ENCODE measurements at regions of chr14 and their contacts with region 1.

Region 1: DNA sequence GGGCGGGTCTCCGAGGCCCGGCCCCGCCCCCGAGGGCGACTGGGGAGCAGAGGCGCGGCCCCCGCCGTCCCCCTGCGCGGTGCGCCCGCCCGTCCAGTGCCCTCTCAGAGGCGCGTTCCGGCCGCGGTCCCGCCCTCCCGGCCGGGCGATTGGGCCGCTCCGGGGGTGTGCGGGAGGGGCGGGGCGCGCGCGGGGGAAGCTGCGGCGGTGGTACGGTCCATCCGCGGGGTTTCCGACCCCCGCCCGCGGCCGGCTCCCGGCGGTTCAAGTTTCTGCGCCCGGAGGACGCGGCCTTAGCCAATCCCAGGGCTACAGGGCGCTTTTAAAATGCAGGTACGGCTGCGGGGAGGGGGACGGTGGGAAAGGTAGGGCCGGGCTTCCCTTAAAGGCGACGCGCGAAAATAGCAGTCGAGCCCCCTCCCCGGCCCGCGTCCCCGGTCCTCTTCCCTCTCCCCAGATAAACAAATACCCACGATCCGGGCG is 317 bp upstream of the CCDC85C start:
- DNase-seq: peak; percentile 90 to 97
- H3K4me3 ChIP-seq: peak overlapping the region; percentile 86 to 90
- H3K27ac ChIP-seq: peak overlapping the region; percentile 77 to 94
- H3K4me1 ChIP-seq: peaks cover 0 to 35% (median 19%) of the 10 kb centered on the region in 4 donors
- H3K27me3 ChIP-seq: no peaks in the 10 kb centered on the region
- CTCF ChIP-seq: no peak

Region 2: GRCh38 chr14:99497894-99498293 is 106.4 kb before region 1 on chr14:
- intact Hi-C with region 1: no loop called
- DNase-seq: no peak
- H3K4me3 ChIP-seq: no peak overlapping the region
- H3K27ac ChIP-seq: no peak overlapping the region
- H3K4me1 ChIP-seq: no peaks in the 10 kb centered on the region
- H3K27me3 ChIP-seq: no peaks in the 10 kb centered on the region
- CTCF ChIP-seq: no peak

Region 3: GRCh38 chr14:99563233-99564129 is 40.8 kb before region 1 on chr14:
- intact Hi-C with region 1: loop called (anchors 2 kb)
- DNase-seq: peak in 1 of 2 donors; percentile 84
- H3K4me3 ChIP-seq: no peak overlapping the region
- H3K27ac ChIP-seq: peak overlapping the region in 1 of 2 donors; percentile 16
- H3K4me1 ChIP-seq: peaks cover 0 to 68% (median 41%) of the 10 kb centered on the region in 4 donors
- H3K27me3 ChIP-seq: no peaks in the 10 kb centered on the region
- CTCF ChIP-seq: peak; percentile 28 to 38